ENCODE measurements at regions of chr14 and their contacts with region 1.

Region 1: GRCh38 chr14:77320238-77320935 is at the start of gene POMT2:
- DNase-seq: peak; percentile 87 to 94 (median 91)
- ATAC-seq: peak; percentile 71
- H3K4me3 ChIP-seq: peak within 1 kb of the TSS; percentile 97
- H3K4me3 Mint-ChIP-seq: peak within 1 kb of the TSS; percentile 94 to 99 (median 98)
- H3K27ac ChIP-seq: peak within 1 kb of the TSS; percentile 93
- H3K27ac Mint-ChIP-seq: peak within 1 kb of the TSS; percentile 95 to 99 (median 99)
- H3K4me1 ChIP-seq: peaks cover 0 to 6% of the 10 kb centered on the region in 2 donors
- H3K4me1 Mint-ChIP-seq: peaks cover 12 to 21% (median 16%) of the 10 kb centered on the region in 7 donors
- H3K27me3 ChIP-seq: no peaks in the 10 kb centered on the region
- H3K27me3 Mint-ChIP-seq: no peaks in the 10 kb centered on the region
- total RNA-seq, gene POMT2: 6.9 to 15.3 (median 9.4) TPM

Region 2: DNA sequence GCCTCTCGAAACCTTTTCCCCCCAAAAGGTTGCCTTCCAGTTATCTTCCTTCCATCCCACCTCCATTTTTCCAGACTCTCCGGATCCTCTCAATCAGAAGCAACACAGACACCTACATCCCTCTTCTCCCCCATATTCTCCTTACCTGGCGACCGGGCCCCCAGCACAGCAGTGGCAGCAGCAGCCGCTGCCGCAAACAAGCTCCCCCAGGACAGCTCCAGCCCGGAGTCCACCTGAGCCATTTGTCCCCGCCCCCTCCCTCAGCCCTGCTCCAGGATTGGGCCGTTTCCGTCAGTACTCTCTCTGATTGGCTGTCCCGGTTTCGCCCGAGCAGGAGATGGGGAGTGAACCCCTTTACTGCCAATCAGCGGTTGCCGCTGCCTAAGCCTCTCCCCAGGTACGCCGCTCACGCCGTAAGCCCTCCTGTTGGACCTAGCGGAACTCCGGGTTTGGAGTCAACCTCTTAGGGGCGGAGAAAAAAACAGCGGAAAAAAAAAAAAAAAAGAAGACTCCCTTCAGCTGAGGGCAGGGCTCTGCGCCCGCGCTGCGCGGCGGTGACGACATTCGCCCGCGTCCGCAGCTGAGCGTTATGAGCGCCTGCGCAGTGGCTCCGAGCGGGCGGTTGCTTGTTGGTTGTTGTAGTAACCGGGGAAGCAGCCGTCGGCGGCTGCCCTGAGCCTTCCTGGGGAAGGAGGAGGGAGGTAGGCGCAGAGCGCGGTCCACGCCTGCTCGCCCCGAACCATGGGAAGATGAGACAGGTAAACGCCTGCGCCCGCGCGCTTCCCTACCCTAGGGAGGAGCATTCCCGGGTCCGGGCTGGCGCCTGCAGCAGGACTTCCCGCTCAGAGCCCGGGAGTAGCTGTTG is 1659.5 kb before region 1 on chr14 and contains the starts of genes ERG28 and TTLL5:
- CTCF ChIA-PET with region 1: no interaction called
- POLR2A ChIA-PET with region 1: no interaction called
- intact Hi-C with region 1: loop called in 1 of 2 experiments (anchors 2 kb)
- DNase-seq: peak; percentile 94 to 98 (median 97)
- ATAC-seq: peak; percentile 95
- H3K4me3 ChIP-seq: peak within 1 kb of the TSS; percentile 86
- H3K4me3 Mint-ChIP-seq: peak within 1 kb of the TSS; percentile 93 to 100 (median 98)
- H3K27ac ChIP-seq: peak within 1 kb of the TSS; percentile 89
- H3K27ac Mint-ChIP-seq: peak within 1 kb of the TSS; percentile 94 to 100 (median 97)
- H3K4me1 ChIP-seq: peaks cover 0 to 6% of the 10 kb centered on the region in 2 donors
- H3K4me1 Mint-ChIP-seq: peaks cover 11 to 48% (median 39%) of the 10 kb centered on the region in 7 donors
- H3K27me3 ChIP-seq: no peaks in the 10 kb centered on the region
- H3K27me3 Mint-ChIP-seq: peaks cover 0 to 6% (median 0%) of the 10 kb centered on the region in 5 donors
- total RNA-seq, gene ERG28: 7.6 to 17.0 (median 12.4) TPM
- total RNA-seq, gene TTLL5: 21.0 to 31.4 (median 21.6) TPM

Region 3: DNA sequence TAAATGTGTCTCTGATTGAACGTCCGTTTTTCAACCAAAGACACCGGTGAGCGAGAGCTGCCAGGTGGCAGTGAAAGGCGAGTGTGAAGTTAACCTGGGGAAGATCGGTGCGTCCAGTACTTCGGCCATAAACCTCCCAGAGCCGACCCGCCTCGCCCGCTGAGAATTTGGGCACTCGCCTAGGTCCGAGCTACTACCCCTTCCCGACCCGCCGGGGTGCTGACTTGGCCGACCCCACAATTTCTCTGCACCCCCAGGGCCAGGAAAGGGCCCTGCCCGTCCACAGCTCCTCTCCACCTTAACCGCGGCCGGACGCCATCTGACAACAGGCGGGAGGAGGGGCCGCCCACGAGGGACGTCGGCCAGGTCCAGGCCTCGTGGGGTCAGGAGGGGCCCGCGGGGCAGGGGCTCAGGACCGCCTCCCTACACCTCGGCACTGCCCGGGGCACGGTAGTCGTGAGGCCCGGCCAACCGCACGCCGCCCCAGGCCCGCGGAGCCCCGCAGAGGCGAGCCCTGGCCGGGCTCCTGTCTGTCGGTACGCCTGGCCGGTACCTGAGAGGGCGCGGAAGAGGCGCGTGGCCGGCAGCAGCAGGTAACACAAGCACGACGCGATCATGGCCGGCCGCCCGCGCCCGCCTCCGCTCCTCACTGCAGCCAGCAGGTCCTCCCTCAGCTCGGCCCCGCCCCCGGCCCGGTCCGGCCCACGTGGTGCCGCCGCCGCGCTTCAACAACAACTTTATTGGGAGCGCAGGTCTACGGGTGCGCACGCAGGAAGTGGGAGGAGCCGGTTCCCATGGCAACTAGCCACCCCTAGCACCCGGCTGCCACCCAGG is 508.0 kb before region 1 on chr14 and contains the start of gene ANGEL1:
- CTCF ChIA-PET with region 1: no interaction called
- POLR2A ChIA-PET with region 1: no interaction called
- intact Hi-C with region 1: loop called (anchors 1 kb)
- DNase-seq: peak; percentile 93 to 98 (median 96)
- ATAC-seq: peak; percentile 98
- H3K4me3 ChIP-seq: peak within 1 kb of the TSS; percentile 63
- H3K4me3 Mint-ChIP-seq: peak within 1 kb of the TSS; percentile 88 to 99 (median 93)
- H3K27ac ChIP-seq: peak within 1 kb of the TSS; percentile 87
- H3K27ac Mint-ChIP-seq: peak within 1 kb of the TSS; percentile 85 to 96 (median 94)
- H3K4me1 ChIP-seq: peaks cover 20 to 21% of the 10 kb centered on the region in 2 donors
- H3K4me1 Mint-ChIP-seq: peaks cover 16 to 48% (median 37%) of the 10 kb centered on the region in 7 donors
- H3K27me3 ChIP-seq: no peaks in the 10 kb centered on the region
- H3K27me3 Mint-ChIP-seq: no peaks in the 10 kb centered on the region
- total RNA-seq, gene ANGEL1: 14.5 to 37.6 (median 19.9) TPM

Region 4: DNA sequence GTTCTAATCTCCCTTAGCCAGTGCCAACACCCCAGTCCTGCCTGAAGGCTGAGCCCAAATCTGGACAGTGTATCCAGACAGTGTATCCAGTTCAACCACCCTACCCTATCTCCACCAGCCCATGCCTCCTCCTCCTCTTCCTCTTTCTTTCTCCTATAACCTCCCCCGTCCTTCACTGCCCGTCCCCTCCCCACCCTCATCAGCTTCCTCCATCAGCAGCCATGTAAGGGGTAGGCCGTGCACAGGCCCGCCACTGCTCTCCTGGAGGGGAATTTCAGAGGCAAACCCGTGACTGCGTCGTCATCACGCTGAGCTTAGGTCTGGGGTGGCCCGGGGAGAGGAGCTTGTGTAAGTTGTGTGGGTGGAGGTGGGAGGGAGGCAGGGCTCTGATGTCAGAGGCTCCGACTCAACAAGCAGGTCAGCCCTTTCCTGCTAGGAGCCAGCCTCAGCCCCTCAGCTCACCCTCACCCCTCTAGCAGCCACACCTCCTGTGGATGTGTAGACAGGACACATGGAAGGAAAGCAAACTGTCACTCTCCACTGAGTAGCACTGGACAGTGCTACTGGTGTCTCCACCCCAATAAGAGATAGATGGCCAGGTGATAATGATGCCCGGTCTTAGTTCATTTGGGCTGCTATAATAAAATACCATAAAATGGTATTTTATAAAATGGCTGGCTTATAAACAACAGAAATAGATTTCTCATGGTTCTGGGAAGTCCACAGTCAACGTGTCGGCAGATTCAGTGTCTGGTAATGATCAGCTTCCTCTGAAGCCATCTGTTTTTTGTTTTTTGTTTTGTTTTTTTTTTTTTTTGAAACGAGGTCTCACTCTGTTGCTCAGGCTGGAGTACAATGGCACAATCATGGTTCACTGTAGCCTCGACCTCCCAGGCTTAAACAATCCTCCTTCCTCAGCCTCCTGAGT is 342.3 kb before region 1 on chr14:
- CTCF ChIA-PET with region 1: no interaction called
- POLR2A ChIA-PET with region 1: no interaction called
- intact Hi-C with region 1: loop called in 1 of 2 experiments (anchors 5 kb)
- DNase-seq: peak; percentile 40 to 90 (median 65)
- ATAC-seq: peak; percentile 97
- H3K4me3 ChIP-seq: no peak overlapping the region
- H3K4me3 Mint-ChIP-seq: peak overlapping the region in 7 of 10 donors; percentile 1 to 57 (median 35)
- H3K27ac ChIP-seq: peak overlapping the region; percentile 50
- H3K27ac Mint-ChIP-seq: peak overlapping the region; percentile 29 to 88 (median 82)
- H3K4me1 ChIP-seq: peaks cover 12 to 15% of the 10 kb centered on the region in 2 donors
- H3K4me1 Mint-ChIP-seq: peaks cover 0 to 25% (median 16%) of the 10 kb centered on the region in 7 donors
- H3K27me3 ChIP-seq: no peaks in the 10 kb centered on the region
- H3K27me3 Mint-ChIP-seq: no peaks in the 10 kb centered on the region

Region 5: DNA sequence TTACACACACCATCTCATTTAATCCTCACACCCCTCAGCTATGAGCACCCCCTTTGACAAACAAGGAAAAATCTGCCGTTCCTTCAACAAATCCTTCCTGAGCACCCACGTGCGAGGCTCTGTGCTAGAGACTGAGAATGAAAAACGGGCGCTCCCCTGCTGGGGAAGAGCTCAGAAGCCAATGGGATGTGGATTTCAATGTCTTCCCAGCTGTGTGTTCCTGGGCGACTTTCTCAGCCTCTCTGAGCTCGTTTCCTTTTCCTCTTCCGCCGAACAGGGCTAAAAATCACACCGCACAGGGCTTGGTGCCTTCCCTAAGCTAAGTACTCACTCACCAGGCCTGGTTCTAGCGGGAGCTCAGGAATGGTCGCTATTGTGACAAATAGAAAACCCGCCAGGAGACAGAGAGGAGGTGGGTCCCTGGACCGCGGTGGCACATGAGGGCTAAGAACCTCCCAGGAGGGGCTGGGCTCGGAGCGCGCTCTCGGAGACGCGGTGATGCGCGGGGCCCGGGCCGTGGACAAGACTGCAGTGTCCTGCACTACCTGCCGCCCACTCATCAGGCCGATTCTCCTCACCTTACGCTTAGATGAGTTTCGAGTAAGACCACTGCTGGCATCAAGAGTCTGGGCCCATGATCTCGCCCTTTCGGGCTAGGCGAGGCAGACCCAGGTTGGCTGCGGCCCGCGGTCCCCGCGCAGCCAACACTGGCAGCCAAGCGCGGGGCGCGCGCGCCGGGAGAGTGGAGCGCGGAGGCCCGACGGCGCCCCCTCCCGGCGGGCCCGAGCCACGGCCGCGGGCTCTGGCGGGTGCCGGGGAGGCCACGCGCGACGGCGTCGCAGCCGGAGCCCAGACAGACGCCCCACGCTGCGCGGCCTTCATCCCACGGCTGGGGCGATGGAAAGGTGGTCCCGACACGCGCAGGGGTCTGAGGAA is 195.8 kb before region 1 on chr14:
- CTCF ChIA-PET with region 1: no interaction called
- POLR2A ChIA-PET with region 1: no interaction called
- intact Hi-C with region 1: loop called in 1 of 2 experiments (anchors 10 kb)
- DNase-seq: peak; percentile 49 to 77 (median 66)
- ATAC-seq: peak; percentile 91
- H3K4me3 ChIP-seq: peak overlapping the region; percentile 84
- H3K4me3 Mint-ChIP-seq: peak overlapping the region; percentile 70 to 83 (median 78)
- H3K27ac ChIP-seq: peak overlapping the region; percentile 56
- H3K27ac Mint-ChIP-seq: peak overlapping the region in 3 of 9 donors; percentile 67 to 86 (median 72)
- H3K4me1 ChIP-seq: peaks cover 16 to 48% of the 10 kb centered on the region in 2 donors
- H3K4me1 Mint-ChIP-seq: peaks cover 6 to 41% (median 28%) of the 10 kb centered on the region in 7 donors
- H3K27me3 ChIP-seq: no peaks in the 10 kb centered on the region
- H3K27me3 Mint-ChIP-seq: peaks cover 26 to 56% (median 33%) of the 10 kb centered on the region in 5 donors

Region 6: DNA sequence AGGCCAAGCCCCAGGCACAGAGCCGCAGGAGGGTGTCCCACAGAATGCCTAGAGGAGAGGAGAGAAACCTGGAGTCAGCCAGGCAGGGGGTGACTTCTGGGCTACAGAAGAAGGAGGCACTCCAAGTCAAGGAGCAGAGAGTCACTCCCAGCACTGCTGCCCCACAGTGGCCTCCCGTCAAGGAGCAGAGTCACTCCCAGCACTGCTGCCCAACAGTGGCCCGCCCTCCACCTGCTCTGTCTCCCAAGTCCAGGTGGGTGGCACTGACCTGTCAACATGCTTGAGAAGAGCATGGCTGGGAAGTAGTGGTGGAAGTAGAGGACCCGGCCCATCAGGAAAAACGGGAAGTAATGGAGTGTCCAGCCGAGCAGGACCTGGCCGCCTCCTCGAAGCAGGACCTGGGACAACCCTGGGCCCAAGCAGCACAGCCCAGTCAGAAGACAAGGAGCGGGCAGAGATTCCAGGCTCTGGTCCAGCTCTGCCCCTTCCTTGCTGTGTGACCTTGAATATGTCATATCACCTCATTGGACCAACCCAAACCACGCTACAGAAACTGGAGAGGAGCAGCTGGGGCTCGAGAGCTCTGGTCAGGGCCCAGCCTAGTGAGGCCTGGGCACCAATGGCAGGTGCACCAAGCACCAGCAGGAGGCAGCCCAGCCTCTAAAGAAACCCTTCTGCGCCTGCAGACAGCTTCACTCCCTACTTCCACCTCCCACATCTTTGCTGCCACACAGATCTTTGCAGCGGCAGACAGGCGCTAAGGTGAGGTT is 41.7 kb before region 1 on chr14:
- CTCF ChIA-PET with region 1: no interaction called
- POLR2A ChIA-PET with region 1: no interaction called
- intact Hi-C with region 1: no loop called
- DNase-seq: no peak
- ATAC-seq: no peak
- H3K4me3 ChIP-seq: no peak overlapping the region
- H3K4me3 Mint-ChIP-seq: no peak overlapping the region
- H3K27ac ChIP-seq: no peak overlapping the region
- H3K27ac Mint-ChIP-seq: no peak overlapping the region
- H3K4me1 ChIP-seq: no peaks in the 10 kb centered on the region
- H3K4me1 Mint-ChIP-seq: no peaks in the 10 kb centered on the region
- H3K27me3 ChIP-seq: no peaks in the 10 kb centered on the region
- H3K27me3 Mint-ChIP-seq: no peaks in the 10 kb centered on the region

Region 7: DNA sequence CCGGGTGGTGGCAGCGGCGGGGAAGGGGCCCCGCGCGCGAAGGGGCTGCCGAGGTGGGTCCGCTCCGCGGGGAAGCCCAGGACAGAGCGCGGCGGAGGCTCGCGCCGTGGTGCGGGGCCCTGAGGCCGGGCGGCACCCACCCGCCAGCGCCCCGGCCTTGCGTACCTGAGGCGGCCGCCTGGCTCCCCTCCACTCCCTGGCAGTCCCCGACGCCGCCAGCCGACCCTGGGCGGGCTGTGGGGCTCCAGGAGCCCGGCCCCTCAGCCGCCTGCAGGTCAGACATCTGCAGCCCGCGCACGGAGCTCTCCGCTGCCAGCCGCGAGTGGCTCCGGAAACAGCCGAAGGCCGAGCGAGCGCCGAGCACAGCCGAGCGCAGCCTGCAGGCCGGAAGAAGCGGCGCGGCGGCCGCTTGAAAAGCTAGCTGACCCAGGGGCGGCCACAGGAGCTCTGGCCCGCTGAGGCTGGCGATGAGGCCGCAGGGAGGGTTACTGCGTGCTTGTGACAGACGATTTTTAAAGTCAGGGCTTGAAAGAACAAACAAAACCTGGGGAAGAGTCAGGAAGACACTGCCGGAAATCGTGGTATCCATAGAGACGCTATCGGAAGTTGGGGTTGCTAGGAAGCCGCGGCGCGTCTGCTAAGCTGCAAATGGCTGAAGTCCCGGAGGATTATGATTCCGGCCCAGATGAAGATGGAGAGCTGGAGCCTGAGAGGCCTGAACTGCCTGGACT is 56.5 kb after region 1 on chr14 and contains the starts of genes SAMD15 and TMED8:
- CTCF ChIA-PET with region 1: interaction called, 5 read pairs
- POLR2A ChIA-PET with region 1: interaction called, 9 read pairs
- intact Hi-C with region 1: loop called (anchors 1 kb)
- DNase-seq: peak; percentile 77 to 88 (median 83)
- ATAC-seq: peak; percentile 96
- H3K4me3 ChIP-seq: peak within 1 kb of the TSS; percentile 99
- H3K4me3 Mint-ChIP-seq: peak within 1 kb of the TSS in 7 of 10 donors; percentile 88 to 97 (median 93)
- H3K27ac ChIP-seq: peak within 1 kb of the TSS; percentile 87
- H3K27ac Mint-ChIP-seq: peak within 1 kb of the TSS; percentile 52 to 93 (median 77)
- H3K4me1 ChIP-seq: peaks cover 14 to 18% of the 10 kb centered on the region in 2 donors
- H3K4me1 Mint-ChIP-seq: peaks cover 17 to 41% (median 39%) of the 10 kb centered on the region in 7 donors
- H3K27me3 ChIP-seq: no peaks in the 10 kb centered on the region
- H3K27me3 Mint-ChIP-seq: peaks cover 0 to 10% (median 0%) of the 10 kb centered on the region in 5 donors
- total RNA-seq, gene SAMD15: 0.27 to 0.46 (median 0.42) TPM in 3 of 5 experiments, not detected in the others
- total RNA-seq, gene TMED8: 5.5 to 18.6 (median 7.0) TPM

Region 8: GRCh38 chr14:77641534-77642341 is 321.4 kb after region 1 on chr14:
- CTCF ChIA-PET with region 1: no interaction called
- POLR2A ChIA-PET with region 1: no interaction called
- intact Hi-C with region 1: loop called in 1 of 2 experiments (anchors 1 kb)
- DNase-seq: peak; percentile 33 to 68 (median 59)
- ATAC-seq: peak; percentile 80
- H3K4me3 ChIP-seq: peak overlapping the region; percentile 84
- H3K4me3 Mint-ChIP-seq: peak overlapping the region; percentile 84 to 95 (median 92)
- H3K27ac ChIP-seq: peak overlapping the region; percentile 70
- H3K27ac Mint-ChIP-seq: peak overlapping the region; percentile 90 to 97 (median 92)
- H3K4me1 ChIP-seq: peaks cover 8% of the 10 kb centered on the region in 2 donors
- H3K4me1 Mint-ChIP-seq: peaks cover 0 to 19% (median 16%) of the 10 kb centered on the region in 7 donors
- H3K27me3 ChIP-seq: no peaks in the 10 kb centered on the region
- H3K27me3 Mint-ChIP-seq: peaks cover 0 to 3% (median 0%) of the 10 kb centered on the region in 5 donors